Activated CD4-positive, alpha-beta memory T cell treated with anti-CD3 and anti-CD28 coated beads for 36 hours (primary cell): ENCODE measurements at regions of chr3 and their contacts with region 1.

Region 1: GRCh38 chr3:122679085-122679881 is 1.4 kb upstream of the PARP14 start:
- DNase-seq: peak; percentile 90
- H3K4me3 Mint-ChIP-seq: peak overlapping the region; percentile 99
- H3K27ac Mint-ChIP-seq: peak overlapping the region; percentile 96
- H3K4me1 Mint-ChIP-seq: peaks cover 51% of the 10 kb centered on the region
- H3K27me3 Mint-ChIP-seq: no peaks in the 10 kb centered on the region

Region 2: DNA sequence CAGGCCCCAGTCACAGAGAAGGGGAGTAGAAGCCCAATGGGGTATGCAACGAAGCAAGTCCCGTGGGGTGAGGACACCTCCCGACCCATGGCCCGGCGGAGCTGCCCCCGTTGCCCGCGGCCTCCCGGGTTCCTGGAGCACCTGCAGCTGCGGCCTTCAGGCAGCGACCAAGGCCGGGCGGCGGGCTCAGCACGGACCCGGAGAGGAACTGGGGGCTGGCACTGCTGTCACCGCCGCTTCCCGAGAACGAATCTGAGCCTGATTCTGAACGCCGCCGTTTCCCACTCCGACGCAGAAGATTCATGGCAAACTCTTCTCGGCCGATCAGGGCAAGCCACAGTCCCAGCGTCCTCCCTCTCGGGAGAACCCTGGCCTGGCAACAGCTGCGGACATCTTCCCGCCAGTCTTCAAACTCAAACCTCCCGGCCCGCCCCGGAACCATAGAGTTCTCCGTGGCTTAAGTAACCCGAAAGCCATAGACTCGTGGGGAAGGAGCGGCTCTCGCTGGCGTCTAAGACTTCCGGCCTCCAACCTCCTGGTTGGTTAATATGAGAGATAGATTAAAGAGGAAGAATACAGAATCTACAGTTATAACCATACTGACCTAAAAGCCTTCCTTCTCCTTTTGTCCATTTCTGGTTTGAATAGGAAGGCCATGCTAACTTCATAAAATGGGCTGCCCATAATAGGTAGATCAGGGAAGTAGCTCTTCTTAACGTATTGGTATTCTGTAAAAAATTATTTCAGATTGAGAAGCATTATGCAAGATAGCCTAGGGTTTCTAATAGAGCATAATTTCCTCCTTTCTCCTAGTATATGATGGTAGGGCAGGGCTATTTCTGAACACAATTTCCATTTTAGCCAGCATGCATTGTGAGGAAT is 1133.5 kb before region 1 on chr3 and contains the start of gene POLQ:
- CTCF ChIA-PET with region 1: no interaction called
- POLR2A ChIA-PET with region 1: interaction called, 3 read pairs
- intact Hi-C with region 1: loop called (anchors 10 kb)
- DNase-seq: peak; percentile 93
- H3K4me3 Mint-ChIP-seq: peak within 1 kb of the TSS; percentile 86
- H3K27ac Mint-ChIP-seq: peak within 1 kb of the TSS; percentile 92
- H3K4me1 Mint-ChIP-seq: peaks cover 6% of the 10 kb centered on the region
- H3K27me3 Mint-ChIP-seq: no peaks in the 10 kb centered on the region
- total RNA-seq, gene POLQ: 23.9 to 25.1 TPM

Region 3: GRCh38 chr3:122383771-122384697 is 295.2 kb before region 1 on chr3 and contains the start of gene FAM162A:
- CTCF ChIA-PET with region 1: interaction called, 28 read pairs
- POLR2A ChIA-PET with region 1: interaction called, 6 read pairs
- intact Hi-C with region 1: loop called (anchors 2 kb)
- DNase-seq: peak; percentile 95
- H3K4me3 Mint-ChIP-seq: peak within 1 kb of the TSS; percentile 94
- H3K27ac Mint-ChIP-seq: peak within 1 kb of the TSS; percentile 92
- H3K4me1 Mint-ChIP-seq: peaks cover 60% of the 10 kb centered on the region
- H3K27me3 Mint-ChIP-seq: no peaks in the 10 kb centered on the region
- total RNA-seq, gene FAM162A: 99.1 to 102 TPM

Region 4: DNA sequence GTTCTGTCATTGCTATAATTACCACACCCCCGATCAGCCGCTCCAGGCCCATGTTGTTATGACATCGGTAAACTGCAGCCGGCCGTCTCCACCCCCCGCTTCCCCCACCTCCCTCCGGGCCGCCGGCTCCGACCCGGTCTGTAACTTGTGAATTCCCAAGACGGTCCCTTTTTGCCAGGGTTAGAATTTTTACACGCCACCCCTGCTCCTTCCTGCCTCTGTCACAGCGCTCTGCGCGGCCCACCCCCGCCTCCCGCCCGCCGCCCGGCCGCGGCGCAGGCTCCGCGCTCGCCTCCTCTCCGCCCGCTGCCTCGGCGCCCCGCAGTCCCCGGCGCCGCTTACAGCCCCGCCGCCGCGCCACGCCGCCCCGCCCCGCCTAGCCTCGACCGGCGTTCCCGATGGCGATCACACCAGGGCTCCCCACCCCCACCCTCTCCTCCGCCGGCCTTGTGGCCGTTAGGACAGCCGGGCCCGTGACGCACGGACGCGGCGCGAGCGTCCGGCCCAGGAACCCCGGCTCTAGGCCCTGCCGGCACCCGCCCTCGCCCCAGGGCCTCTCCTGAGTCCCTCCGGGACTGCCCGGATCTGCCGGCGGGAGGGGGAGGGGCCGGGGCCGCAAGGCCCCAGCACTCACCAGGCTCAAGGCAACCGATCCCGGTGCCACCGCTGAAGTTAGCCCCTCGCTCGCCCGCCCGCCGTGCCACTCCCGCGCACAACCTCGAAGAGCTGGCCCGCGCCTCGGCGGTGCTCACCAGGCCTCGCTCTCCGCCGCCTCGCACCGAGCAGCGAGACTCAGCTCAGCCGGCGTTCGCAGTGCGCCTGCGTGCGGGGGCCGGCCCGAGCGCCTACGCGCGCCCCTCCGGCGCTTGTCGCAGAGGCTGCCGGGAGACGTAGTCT is 164.9 kb before region 1 on chr3 and contains the start of gene KPNA1:
- CTCF ChIA-PET with region 1: interaction called, 14 read pairs
- POLR2A ChIA-PET with region 1: interaction called, 6 read pairs
- intact Hi-C with region 1: no loop called
- DNase-seq: peak; percentile 91
- H3K4me3 Mint-ChIP-seq: peak within 1 kb of the TSS; percentile 77
- H3K27ac Mint-ChIP-seq: peak within 1 kb of the TSS; percentile 85
- H3K4me1 Mint-ChIP-seq: peaks cover 39% of the 10 kb centered on the region
- H3K27me3 Mint-ChIP-seq: no peaks in the 10 kb centered on the region
- total RNA-seq, gene KPNA1: 43.4 to 46.0 TPM

Region 5: GRCh38 chr3:122564155-122564912 is 114.9 kb before region 1 on chr3 and contains the starts of genes DTX3L and PARP9:
- CTCF ChIA-PET with region 1: interaction called, 230 read pairs
- POLR2A ChIA-PET with region 1: interaction called, 16 read pairs
- intact Hi-C with region 1: loop called (anchors 1 kb)
- DNase-seq: peak; percentile 88
- H3K4me3 Mint-ChIP-seq: peak within 1 kb of the TSS; percentile 92
- H3K27ac Mint-ChIP-seq: peak within 1 kb of the TSS; percentile 97
- H3K4me1 Mint-ChIP-seq: peaks cover 67% of the 10 kb centered on the region
- H3K27me3 Mint-ChIP-seq: no peaks in the 10 kb centered on the region
- total RNA-seq, gene DTX3L: 39.6 to 40.8 TPM
- total RNA-seq, gene PARP9: 38.1 to 38.4 TPM

Region 6: GRCh38 chr3:122646146-122646988 is 32.9 kb before region 1 on chr3:
- CTCF ChIA-PET with region 1: interaction called, 10 read pairs
- POLR2A ChIA-PET with region 1: no interaction called
- intact Hi-C with region 1: no loop called
- DNase-seq: peak; percentile 31
- H3K4me3 Mint-ChIP-seq: peak overlapping the region; percentile 6
- H3K27ac Mint-ChIP-seq: peak overlapping the region; percentile 65
- H3K4me1 Mint-ChIP-seq: peaks cover 35% of the 10 kb centered on the region
- H3K27me3 Mint-ChIP-seq: no peaks in the 10 kb centered on the region